ENCODE measurements at regions of chr22 and their contacts with region 1.

Region 1: GRCh38 chr22:28791841-28792490 is 8.4 kb downstream of the XBP1 start:
- DNase-seq: no peak
- ATAC-seq: peak; percentile 32
- H3K4me3 Mint-ChIP-seq: no peak overlapping the region
- H3K27ac Mint-ChIP-seq: peak overlapping the region; percentile 69
- H3K4me1 Mint-ChIP-seq: peaks cover 54% of the 10 kb centered on the region
- H3K27me3 Mint-ChIP-seq: no peaks in the 10 kb centered on the region
- CTCF ChIP-seq: no peak

Region 2: DNA sequence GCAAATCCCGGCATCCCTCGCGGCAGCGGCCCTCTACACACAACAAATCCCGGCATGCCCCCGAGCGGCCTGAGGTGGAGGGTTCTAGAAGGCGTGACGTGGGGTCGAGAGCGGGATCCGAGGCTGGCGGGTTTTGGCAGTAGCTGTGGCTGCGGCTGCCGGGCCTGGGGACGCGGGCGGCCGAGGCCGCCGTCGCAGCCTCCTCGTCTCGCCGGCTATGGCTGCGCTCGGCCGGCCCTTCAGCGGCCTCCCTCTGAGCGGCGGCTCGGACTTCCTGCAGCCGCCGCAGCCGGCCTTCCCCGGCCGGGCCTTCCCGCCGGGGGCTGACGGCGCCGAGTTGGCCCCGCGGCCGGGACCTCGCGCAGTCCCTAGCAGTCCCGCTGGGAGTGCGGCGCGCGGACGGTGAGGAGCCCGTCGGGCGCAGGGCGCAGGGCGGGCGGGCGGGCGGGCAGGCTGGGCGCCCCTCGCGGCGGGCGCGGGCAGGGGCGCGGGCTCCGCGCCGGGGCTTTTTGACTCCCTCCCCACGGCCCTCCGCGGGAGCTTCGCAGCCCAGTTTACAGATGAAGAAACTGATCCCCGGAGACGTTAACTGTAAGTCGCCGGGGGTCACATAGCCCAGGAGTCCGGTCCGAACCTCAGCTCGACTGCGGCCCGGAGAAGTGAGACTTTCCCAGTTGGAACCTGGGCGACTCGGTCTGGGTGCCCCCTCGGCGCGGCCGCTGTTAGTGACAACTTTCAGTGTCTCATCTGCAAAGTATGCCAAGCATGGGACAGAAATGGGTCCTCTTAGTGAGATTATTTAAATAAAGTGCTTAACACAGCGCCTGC is 19.1 kb before region 1 on chr22 and contains the start of gene CCDC117:
- CTCF ChIA-PET with region 1: interaction called, 10 read pairs
- POLR2A ChIA-PET with region 1: interaction called, 4 read pairs
- intact Hi-C with region 1: no loop called
- DNase-seq: peak; percentile 97
- ATAC-seq: peak; percentile 95
- H3K4me3 Mint-ChIP-seq: peak within 1 kb of the TSS; percentile 91
- H3K27ac Mint-ChIP-seq: peak within 1 kb of the TSS; percentile 93
- H3K4me1 Mint-ChIP-seq: peaks cover 22% of the 10 kb centered on the region
- H3K27me3 Mint-ChIP-seq: no peaks in the 10 kb centered on the region
- CTCF ChIP-seq: peak; percentile 44
- total RNA-seq, gene CCDC117: 25.5 to 26.2 TPM

Measured in activated CD8-positive, alpha-beta T cell treated with anti-CD3 and anti-CD28 coated beads for 36 hours (primary cell).